IMR-90 (cell line): ENCODE measurements at regions of chr19 and their contacts with region 1.

Region 1: GRCh38 chr19:49443366-49444099 is 2.2 kb upstream of the SLC17A7 start:
- DNase-seq: peak; percentile 92
- ATAC-seq: peak; percentile 90
- H3K4me3 ChIP-seq: peak overlapping the region; percentile 53
- H3K27ac ChIP-seq: no peak overlapping the region; the same call in 1 of the 2 replicates
- H3K4me1 ChIP-seq: no peaks in the 10 kb centered on the region
- H3K27me3 ChIP-seq: peaks cover 37% of the 10 kb centered on the region
- CTCF ChIP-seq: peak; percentile 83
- POLR2A ChIP-seq: no peak
- RAD21 ChIP-seq: peak; percentile 74

Region 2: GRCh38 chr19:49224856-49225255 is 218.7 kb before region 1 on chr19:
- CTCF ChIA-PET with region 1: no interaction called
- POLR2A ChIA-PET with region 1: no interaction called
- dilution Hi-C with region 1: no loop called
- in situ Hi-C with region 1: no loop called
- intact Hi-C with region 1: loop called (anchors 1 kb)
- DNase-seq: peak; percentile 57
- ATAC-seq: peak; percentile 79
- H3K4me3 ChIP-seq: no peak overlapping the region
- H3K27ac ChIP-seq: no peak overlapping the region
- H3K4me1 ChIP-seq: no peaks in the 10 kb centered on the region
- H3K27me3 ChIP-seq: peaks cover 3% of the 10 kb centered on the region; the same call in 1 of the 2 replicates
- CTCF ChIP-seq: peak; percentile 60
- POLR2A ChIP-seq: no peak
- RAD21 ChIP-seq: peak; percentile 67

Region 3: GRCh38 chr19:49363268-49364082 is 80.1 kb before region 1 on chr19 and contains the start of gene DKKL1:
- CTCF ChIA-PET with region 1: no interaction called
- POLR2A ChIA-PET with region 1: no interaction called
- dilution Hi-C with region 1: no loop called
- in situ Hi-C with region 1: no loop called
- intact Hi-C with region 1: loop called (anchors 1 kb)
- DNase-seq: peak; percentile 99
- ATAC-seq: peak; percentile 89
- H3K4me3 ChIP-seq: peak within 1 kb of the TSS; percentile 82
- H3K27ac ChIP-seq: peak within 1 kb of the TSS; percentile 78
- H3K4me1 ChIP-seq: peaks cover 2% of the 10 kb centered on the region; the same call in 1 of the 2 replicates
- H3K27me3 ChIP-seq: no peaks in the 10 kb centered on the region
- CTCF ChIP-seq: peak; percentile 31
- POLR2A ChIP-seq: peak; percentile 49; the same call in 1 of the 2 replicates
- RAD21 ChIP-seq: no peak
- total RNA-seq, gene DKKL1: not detected in 2 replicates

Region 4: GRCh38 chr19:49391581-49392399 is 51.7 kb before region 1 on chr19:
- CTCF ChIA-PET with region 1: interaction called, 4 read pairs
- POLR2A ChIA-PET with region 1: no interaction called
- dilution Hi-C with region 1: no loop called
- in situ Hi-C with region 1: loop called (anchors 10 kb)
- intact Hi-C with region 1: loop called (anchors 1 kb)
- DNase-seq: peak; percentile 60
- ATAC-seq: peak; percentile 97
- H3K4me3 ChIP-seq: no peak overlapping the region
- H3K27ac ChIP-seq: no peak overlapping the region
- H3K4me1 ChIP-seq: no peaks in the 10 kb centered on the region
- H3K27me3 ChIP-seq: peaks cover 46% of the 10 kb centered on the region
- CTCF ChIP-seq: peak; percentile 87
- POLR2A ChIP-seq: no peak
- RAD21 ChIP-seq: peak; percentile 92

Region 5: DNA sequence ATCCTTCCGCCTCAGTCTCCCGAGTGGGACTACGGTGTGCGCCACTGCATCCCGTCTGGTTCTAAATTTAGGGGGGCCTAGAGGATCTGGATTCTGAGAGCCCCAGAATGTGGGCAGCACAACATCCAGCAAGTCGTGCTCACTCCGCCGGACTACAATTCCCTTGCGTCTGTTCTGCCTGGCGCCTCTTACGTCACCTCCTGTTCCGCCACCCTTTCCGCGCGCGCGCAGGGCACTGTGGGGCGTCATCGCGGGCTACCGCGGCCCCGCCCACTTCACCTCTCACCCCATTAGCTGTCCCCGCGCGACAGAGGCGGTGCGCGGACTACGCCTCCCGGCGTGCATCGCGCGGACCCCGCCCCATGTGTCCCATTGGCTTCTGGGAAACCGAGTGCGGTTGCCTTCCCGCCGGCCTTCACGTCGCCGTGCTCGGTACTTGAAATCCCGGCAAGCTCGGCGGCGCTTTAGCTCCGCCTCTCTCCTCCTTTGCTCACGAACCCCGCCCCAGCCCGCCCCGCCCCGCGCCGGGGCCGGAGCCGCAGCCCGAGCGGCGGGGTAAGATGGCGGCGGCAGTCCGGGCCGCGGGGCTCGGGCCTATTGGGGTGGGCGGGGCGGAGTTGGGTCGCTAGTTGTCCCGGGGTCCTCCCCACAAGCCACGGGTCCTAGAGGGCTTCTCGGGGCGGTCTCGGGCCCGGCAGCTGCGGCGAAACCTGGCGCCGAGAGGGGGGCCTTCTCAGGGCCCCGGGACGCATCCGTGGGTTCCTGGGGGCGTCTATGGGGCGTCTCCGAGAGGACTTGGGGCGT is 198.4 kb after region 1 on chr19 and contains the start of gene SCAF1:
- CTCF ChIA-PET with region 1: no interaction called
- POLR2A ChIA-PET with region 1: no interaction called
- dilution Hi-C with region 1: no loop called
- in situ Hi-C with region 1: no loop called
- intact Hi-C with region 1: no loop called
- DNase-seq: peak; percentile 99
- ATAC-seq: peak; percentile 55
- H3K4me3 ChIP-seq: peak within 1 kb of the TSS; percentile 95
- H3K27ac ChIP-seq: peak within 1 kb of the TSS; percentile 99
- H3K4me1 ChIP-seq: peaks cover 7% of the 10 kb centered on the region
- H3K27me3 ChIP-seq: no peaks in the 10 kb centered on the region
- CTCF ChIP-seq: no peak
- POLR2A ChIP-seq: peak; percentile 92
- RAD21 ChIP-seq: no peak
- total RNA-seq, gene SCAF1: 2.2 and 3.1 TPM in 2 replicates